ENCODE measurements at regions of chr16 and their contacts with region 1.

Region 1: DNA sequence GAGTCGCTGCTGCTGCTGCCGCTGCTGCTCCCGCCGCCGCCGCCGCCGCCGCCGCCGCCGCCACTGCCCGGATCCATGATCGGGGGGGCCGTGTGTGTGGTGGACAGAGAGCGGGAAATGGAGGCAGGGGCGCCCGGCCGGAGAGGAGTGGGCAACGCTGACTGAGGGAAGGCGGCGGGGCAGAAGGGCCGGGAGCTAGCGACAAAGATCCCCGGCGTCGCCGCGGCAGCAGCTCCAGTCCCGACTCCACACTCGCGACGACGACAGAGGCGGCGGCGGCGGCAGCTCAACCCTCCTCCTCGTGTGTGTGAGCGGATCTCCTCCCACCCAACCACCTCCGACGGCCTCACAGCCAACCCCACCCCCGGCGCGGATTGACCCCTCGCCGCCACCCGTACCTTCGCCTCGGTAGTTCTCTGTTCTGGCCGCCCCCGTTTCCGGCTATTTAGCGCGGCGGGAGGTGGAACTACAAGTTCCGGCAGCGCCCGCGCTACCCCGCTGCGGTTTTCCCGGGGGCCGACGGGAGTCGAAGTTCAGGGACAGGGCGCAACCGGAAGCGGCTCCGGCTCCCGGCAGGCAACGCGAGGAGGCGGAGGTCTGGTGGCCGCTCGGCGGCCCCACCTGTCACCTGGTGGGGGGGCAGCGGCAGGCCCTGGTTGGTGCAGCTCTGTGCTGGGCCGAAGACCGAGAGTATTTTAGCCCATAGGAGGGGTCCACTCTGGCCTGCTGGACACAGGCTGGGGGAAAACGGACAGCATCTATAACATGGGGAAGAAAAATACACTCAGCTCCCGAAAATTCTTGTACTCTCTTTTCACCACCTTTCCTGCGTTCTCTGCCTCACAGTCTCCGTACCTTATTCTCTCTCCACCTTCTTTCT is at the start of gene GSPT1:
- DNase-seq: peak; percentile 98
- H3K4me3 ChIP-seq: peak within 1 kb of the TSS; percentile 91
- H3K4me3 Mint-ChIP-seq: peak within 1 kb of the TSS; percentile 89
- H3K27ac Mint-ChIP-seq: peak within 1 kb of the TSS; percentile 95
- H3K4me1 ChIP-seq: no peaks in the 10 kb centered on the region
- H3K4me1 Mint-ChIP-seq: peaks cover 16% of the 10 kb centered on the region
- H3K27me3 ChIP-seq: no peaks in the 10 kb centered on the region
- H3K27me3 Mint-ChIP-seq: no peaks in the 10 kb centered on the region
- CTCF ChIP-seq: no peak
- total RNA-seq, gene GSPT1: 136 and 141 TPM in 2 replicates

Region 2: GRCh38 chr16:11639925-11640899 is 275.7 kb before region 1 on chr16:
- CTCF ChIA-PET with region 1: no interaction called
- POLR2A ChIA-PET with region 1: no interaction called
- intact Hi-C with region 1: no loop called
- DNase-seq: peak; percentile 44 to 46
- H3K4me3 ChIP-seq: no peak overlapping the region
- H3K4me3 Mint-ChIP-seq: no peak overlapping the region
- H3K27ac Mint-ChIP-seq: peak overlapping the region; percentile 49
- H3K4me1 ChIP-seq: peaks cover 22% of the 10 kb centered on the region
- H3K4me1 Mint-ChIP-seq: peaks cover 5% of the 10 kb centered on the region
- H3K27me3 ChIP-seq: no peaks in the 10 kb centered on the region
- H3K27me3 Mint-ChIP-seq: no peaks in the 10 kb centered on the region
- CTCF ChIP-seq: no peak

Region 3: DNA sequence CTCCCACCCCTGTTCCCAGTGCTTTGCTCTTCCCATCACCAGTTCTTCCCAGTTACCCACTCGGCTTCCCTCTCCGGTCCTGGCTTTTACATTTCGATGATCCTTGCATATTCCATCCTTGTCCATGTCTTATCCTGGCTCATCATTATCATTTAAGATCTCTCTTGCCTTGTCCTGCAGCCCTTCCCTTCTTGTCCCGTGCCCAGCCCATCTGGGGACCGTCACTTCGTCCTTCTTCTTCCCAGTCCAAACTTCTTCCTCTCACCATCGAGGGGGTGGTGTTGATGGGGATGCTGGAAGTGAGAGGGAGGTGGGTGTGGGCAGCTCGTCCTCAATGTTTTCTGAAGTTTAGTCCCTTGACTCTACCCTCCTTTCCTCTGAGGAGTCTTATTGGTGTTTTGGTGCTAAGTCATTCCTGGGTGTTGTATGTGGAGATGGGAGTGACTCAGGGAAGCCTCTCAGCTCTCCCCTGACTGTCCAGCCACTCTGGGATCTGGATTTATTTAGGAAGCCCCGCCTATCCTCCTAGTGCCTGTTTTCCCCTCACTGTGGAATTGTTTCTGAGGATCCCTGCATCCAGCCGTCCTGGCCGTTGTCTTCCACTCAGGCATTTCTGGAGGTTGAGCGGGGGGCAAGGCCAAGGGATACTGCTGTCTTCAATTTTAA is 61.6 kb after region 1 on chr16:
- CTCF ChIA-PET with region 1: interaction called, 7 read pairs
- POLR2A ChIA-PET with region 1: no interaction called
- intact Hi-C with region 1: loop called (anchors 5 kb)
- DNase-seq: no peak
- H3K4me3 ChIP-seq: peak overlapping the region; percentile 95
- H3K4me3 Mint-ChIP-seq: peak overlapping the region; percentile 98
- H3K27ac Mint-ChIP-seq: peak overlapping the region; percentile 96
- H3K4me1 ChIP-seq: no peaks in the 10 kb centered on the region
- H3K4me1 Mint-ChIP-seq: peaks cover 16% of the 10 kb centered on the region
- H3K27me3 ChIP-seq: no peaks in the 10 kb centered on the region
- H3K27me3 Mint-ChIP-seq: no peaks in the 10 kb centered on the region
- CTCF ChIP-seq: no peak

Region 4: DNA sequence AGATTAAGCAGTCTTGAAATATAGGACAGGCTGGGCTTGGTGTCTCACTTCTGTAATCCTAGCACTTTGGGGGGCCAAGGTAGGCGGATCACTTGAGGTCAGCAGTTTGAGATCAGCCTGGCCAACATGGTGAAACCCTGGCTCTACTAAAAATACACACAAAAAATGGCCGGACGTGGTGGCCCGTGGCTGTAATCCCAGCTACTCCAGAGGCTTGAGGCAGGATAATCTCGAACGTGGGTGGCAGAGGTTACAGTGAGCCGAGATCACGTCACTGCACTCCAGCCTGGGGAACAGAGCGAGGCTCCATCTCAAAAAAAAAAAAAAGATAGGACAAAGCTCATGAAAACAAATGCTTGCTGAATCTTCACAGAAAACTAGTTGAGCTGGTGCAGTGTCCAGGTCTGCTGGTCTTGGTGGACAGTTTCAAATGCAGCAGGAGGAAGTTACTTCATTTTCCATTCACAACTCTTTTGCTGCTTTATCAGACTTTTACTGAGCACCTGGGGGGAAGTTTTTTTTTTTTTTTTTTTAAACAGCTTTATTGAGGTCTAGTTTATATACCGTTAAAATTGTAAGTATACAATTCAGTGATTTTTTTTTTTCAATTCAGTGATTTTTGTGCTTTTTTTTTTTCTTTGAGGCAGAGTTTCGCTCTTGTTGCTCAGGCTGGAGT is 105.8 kb after region 1 on chr16:
- CTCF ChIA-PET with region 1: no interaction called
- POLR2A ChIA-PET with region 1: no interaction called
- intact Hi-C with region 1: loop called (anchors 2 kb)
- DNase-seq: no peak
- H3K4me3 ChIP-seq: no peak overlapping the region
- H3K4me3 Mint-ChIP-seq: no peak overlapping the region
- H3K27ac Mint-ChIP-seq: no peak overlapping the region
- H3K4me1 ChIP-seq: peaks cover 21% of the 10 kb centered on the region
- H3K4me1 Mint-ChIP-seq: peaks cover 17% of the 10 kb centered on the region
- H3K27me3 ChIP-seq: no peaks in the 10 kb centered on the region
- H3K27me3 Mint-ChIP-seq: no peaks in the 10 kb centered on the region
- CTCF ChIP-seq: no peak

Measured in Caco-2 (cell line).